ENCODE measurements at regions of chr10 and their contacts with region 1.

Region 1: GRCh38 chr10:22228943-22229801 is 11.4 kb upstream of the EBLN1 start:
- DNase-seq: peak; percentile 89
- H3K4me3 Mint-ChIP-seq: peak overlapping the region; percentile 82
- H3K27ac Mint-ChIP-seq: peak overlapping the region; percentile 96
- H3K4me1 Mint-ChIP-seq: peaks cover 17% of the 10 kb centered on the region
- H3K27me3 Mint-ChIP-seq: peaks cover 5% of the 10 kb centered on the region

Region 2: DNA sequence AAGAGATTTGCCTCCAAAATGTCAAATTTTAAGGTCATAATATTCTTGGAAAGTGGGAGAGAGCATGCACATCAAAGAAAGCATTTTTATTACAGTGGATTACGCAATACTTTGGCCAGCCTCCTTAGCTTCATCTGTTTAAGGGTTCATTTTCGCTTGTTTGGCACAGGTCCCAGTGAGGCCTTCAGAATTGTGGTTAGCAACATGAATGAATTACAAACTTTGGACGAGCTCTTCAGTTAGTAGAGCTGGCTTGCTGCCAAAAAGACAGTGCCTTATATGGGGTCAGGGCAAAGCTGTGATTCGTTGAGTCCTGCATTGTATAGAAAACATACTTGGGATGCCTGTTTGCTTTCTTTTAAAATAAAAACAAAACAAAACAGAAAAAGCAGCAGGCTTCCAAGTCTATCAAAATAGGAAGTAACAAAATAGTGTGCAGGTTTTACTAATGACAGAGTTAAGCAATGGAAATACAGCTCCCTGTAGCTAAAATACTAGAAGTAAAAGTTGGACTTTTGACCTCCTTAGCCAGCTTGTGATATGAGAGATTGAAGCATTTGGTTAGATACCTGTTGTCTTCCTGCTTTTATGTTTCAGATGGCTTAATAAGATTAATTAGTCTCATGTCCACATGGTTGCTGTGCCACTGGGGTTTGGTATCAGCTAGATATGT is 504.3 kb before region 1 on chr10:
- CTCF ChIA-PET with region 1: no interaction called
- intact Hi-C with region 1: loop called (anchors 10 kb)
- DNase-seq: peak; percentile 72
- H3K4me3 Mint-ChIP-seq: no peak overlapping the region
- H3K27ac Mint-ChIP-seq: no peak overlapping the region
- H3K4me1 Mint-ChIP-seq: peaks cover 27% of the 10 kb centered on the region
- H3K27me3 Mint-ChIP-seq: no peaks in the 10 kb centered on the region

Region 3: DNA sequence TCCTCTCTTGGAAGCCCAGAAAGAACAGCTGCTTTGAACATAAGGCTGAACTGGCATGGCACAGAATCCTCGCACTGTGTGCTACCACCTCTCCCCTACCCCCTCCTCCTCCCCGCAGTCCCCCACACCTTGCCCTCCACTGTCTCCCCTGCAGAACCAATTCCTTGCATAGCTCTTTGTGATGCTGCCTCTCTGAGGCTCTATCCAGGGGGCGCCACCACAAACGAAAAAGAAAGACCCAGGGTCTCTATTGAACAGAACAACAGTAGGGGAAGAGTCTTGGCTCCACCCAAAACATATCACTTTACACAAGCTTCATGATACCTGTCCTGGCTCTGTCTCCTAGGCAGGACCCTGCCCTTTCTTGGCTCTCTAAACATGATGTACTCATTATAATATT is 14.8 kb after region 1 on chr10:
- CTCF ChIA-PET with region 1: interaction called, 6 read pairs
- intact Hi-C with region 1: loop called (anchors 1 kb)
- DNase-seq: no peak
- H3K4me3 Mint-ChIP-seq: no peak overlapping the region
- H3K27ac Mint-ChIP-seq: no peak overlapping the region
- H3K4me1 Mint-ChIP-seq: peaks cover 40% of the 10 kb centered on the region
- H3K27me3 Mint-ChIP-seq: no peaks in the 10 kb centered on the region

Region 4: DNA sequence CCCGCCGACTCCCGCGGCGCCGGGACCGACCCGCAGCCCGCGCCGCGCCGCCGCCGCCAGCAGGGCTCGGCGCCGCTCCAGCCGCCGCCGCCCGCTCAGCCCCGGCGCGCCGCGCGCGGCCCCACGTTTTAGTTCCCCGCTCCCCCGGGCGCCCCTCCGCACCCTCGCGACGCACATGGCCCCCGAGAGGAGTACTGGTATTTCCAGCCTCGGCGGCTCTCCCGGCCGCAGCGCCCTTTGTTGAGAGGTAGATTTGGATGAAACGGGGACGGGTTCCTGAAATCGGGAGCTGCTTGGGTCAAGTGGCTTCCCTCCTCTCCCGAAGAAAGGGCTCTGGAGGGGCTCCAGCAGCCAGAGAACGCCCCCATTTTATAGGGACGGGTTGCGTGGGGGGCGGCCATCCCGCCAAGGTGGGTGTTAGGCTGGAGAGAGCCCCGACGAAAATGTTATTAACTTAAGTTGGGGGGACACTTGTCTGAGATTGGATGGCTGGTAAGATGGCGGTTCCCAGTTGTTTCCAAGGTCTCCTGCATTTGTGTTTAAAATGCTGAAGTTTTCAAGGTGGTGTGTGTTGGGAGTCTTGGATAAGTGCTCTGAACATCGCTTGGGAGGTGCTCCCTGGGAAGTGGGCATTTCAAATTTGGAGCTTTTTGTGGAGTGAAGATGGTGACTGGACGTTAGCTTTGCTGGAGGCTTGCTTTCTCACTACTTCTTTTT is 92.9 kb after region 1 on chr10:
- CTCF ChIA-PET with region 1: no interaction called
- intact Hi-C with region 1: loop called (anchors 1 kb)
- DNase-seq: peak; percentile 14
- H3K4me3 Mint-ChIP-seq: peak overlapping the region; percentile 85
- H3K27ac Mint-ChIP-seq: peak overlapping the region; percentile 82
- H3K4me1 Mint-ChIP-seq: peaks cover 40% of the 10 kb centered on the region
- H3K27me3 Mint-ChIP-seq: peaks cover 51% of the 10 kb centered on the region

Region 5: GRCh38 chr10:22714479-22715289 is 485.5 kb after region 1 on chr10 and contains the start of gene PIP4K2A:
- CTCF ChIA-PET with region 1: no interaction called
- intact Hi-C with region 1: no loop called
- DNase-seq: peak; percentile 74
- H3K4me3 Mint-ChIP-seq: peak within 1 kb of the TSS; percentile 88
- H3K27ac Mint-ChIP-seq: peak within 1 kb of the TSS; percentile 79
- H3K4me1 Mint-ChIP-seq: peaks cover 27% of the 10 kb centered on the region
- H3K27me3 Mint-ChIP-seq: no peaks in the 10 kb centered on the region
- total RNA-seq, gene PIP4K2A: 68.0 to 74.1 TPM